B cell (primary cell): ENCODE measurements at regions of chr15 and their contacts with region 1.

Region 1: GRCh38 chr15:75367913-75368688 is at the start of gene MAN2C1:
- DNase-seq: peak; percentile 97
- ATAC-seq: peak; percentile 92
- H3K4me3 ChIP-seq: peak within 1 kb of the TSS; percentile 74 to 96 (median 87)
- H3K4me3 Mint-ChIP-seq: peak within 1 kb of the TSS; percentile 93
- H3K27ac ChIP-seq: peak within 1 kb of the TSS; percentile 98 to 99
- H3K27ac Mint-ChIP-seq: peak within 1 kb of the TSS; percentile 95
- H3K4me1 ChIP-seq: peaks cover 13 to 19% of the 10 kb centered on the region in 2 donors
- H3K4me1 Mint-ChIP-seq: peaks cover 27% of the 10 kb centered on the region
- H3K27me3 ChIP-seq: no peaks in the 10 kb centered on the region
- H3K27me3 Mint-ChIP-seq: no peaks in the 10 kb centered on the region
- CTCF ChIP-seq: peak; percentile 74
- total RNA-seq, gene MAN2C1: 227 and 229 TPM in 2 replicates

Region 2: GRCh38 chr15:75313116-75313845 is 54.8 kb before region 1 on chr15:
- CTCF ChIA-PET with region 1: no interaction called
- POLR2A ChIA-PET with region 1: no interaction called
- intact Hi-C with region 1: no loop called
- DNase-seq: no peak
- ATAC-seq: no peak
- H3K4me3 ChIP-seq: no peak overlapping the region
- H3K4me3 Mint-ChIP-seq: no peak overlapping the region
- H3K27ac ChIP-seq: no peak overlapping the region
- H3K27ac Mint-ChIP-seq: no peak overlapping the region
- H3K4me1 ChIP-seq: no peaks in the 10 kb centered on the region
- H3K4me1 Mint-ChIP-seq: no peaks in the 10 kb centered on the region
- H3K27me3 ChIP-seq: peaks cover 0 to 2% (median under 1%) of the 10 kb centered on the region in 4 experiments
- H3K27me3 Mint-ChIP-seq: peaks cover 19% of the 10 kb centered on the region
- CTCF ChIP-seq: no peak

Region 3: GRCh38 chr15:75347222-75347878 is 20.8 kb before region 1 on chr15:
- CTCF ChIA-PET with region 1: interaction called, 52 read pairs
- POLR2A ChIA-PET with region 1: interaction called, 25 read pairs
- intact Hi-C with region 1: loop called (anchors 1 kb)
- DNase-seq: peak; percentile 97
- ATAC-seq: peak; percentile 80
- H3K4me3 ChIP-seq: peak overlapping the region; percentile 3 to 82 (median 70)
- H3K4me3 Mint-ChIP-seq: peak overlapping the region; percentile 80
- H3K27ac ChIP-seq: peak overlapping the region; percentile 92 to 94
- H3K27ac Mint-ChIP-seq: peak overlapping the region; percentile 94
- H3K4me1 ChIP-seq: peaks cover 31 to 47% of the 10 kb centered on the region in 2 donors
- H3K4me1 Mint-ChIP-seq: peaks cover 45% of the 10 kb centered on the region
- H3K27me3 ChIP-seq: no peaks in the 10 kb centered on the region
- H3K27me3 Mint-ChIP-seq: no peaks in the 10 kb centered on the region
- CTCF ChIP-seq: no peak

Region 4: DNA sequence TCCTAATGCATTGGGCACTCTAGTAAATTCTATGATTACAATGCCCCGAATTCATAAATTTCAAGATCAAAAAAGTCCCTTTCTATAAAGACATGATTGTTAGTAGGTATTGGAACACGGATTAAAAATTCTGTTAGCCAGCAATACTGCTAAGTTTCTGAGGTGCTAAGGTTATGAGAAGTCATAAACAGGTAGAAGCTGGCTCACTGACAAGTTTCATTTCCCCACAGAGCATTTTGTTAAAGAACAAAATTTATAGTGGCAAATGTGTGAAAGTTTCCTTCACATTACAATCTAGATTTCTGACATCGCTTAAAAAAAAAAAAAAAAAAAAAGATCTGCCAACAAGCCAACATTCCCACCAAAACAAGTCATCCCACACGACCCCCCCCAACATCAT is 12.7 kb after region 1 on chr15:
- CTCF ChIA-PET with region 1: interaction called, 25 read pairs
- POLR2A ChIA-PET with region 1: interaction called, 13 read pairs
- intact Hi-C with region 1: no loop called
- DNase-seq: peak; percentile 44
- ATAC-seq: peak; percentile 39
- H3K4me3 ChIP-seq: no peak overlapping the region
- H3K4me3 Mint-ChIP-seq: peak overlapping the region; percentile 12
- H3K27ac ChIP-seq: peak overlapping the region in 1 of 2 donors; percentile 35
- H3K27ac Mint-ChIP-seq: peak overlapping the region; percentile 54
- H3K4me1 ChIP-seq: peaks cover 23 to 25% of the 10 kb centered on the region in 2 donors
- H3K4me1 Mint-ChIP-seq: peaks cover 29% of the 10 kb centered on the region
- H3K27me3 ChIP-seq: no peaks in the 10 kb centered on the region
- H3K27me3 Mint-ChIP-seq: no peaks in the 10 kb centered on the region
- CTCF ChIP-seq: no peak

Region 5: DNA sequence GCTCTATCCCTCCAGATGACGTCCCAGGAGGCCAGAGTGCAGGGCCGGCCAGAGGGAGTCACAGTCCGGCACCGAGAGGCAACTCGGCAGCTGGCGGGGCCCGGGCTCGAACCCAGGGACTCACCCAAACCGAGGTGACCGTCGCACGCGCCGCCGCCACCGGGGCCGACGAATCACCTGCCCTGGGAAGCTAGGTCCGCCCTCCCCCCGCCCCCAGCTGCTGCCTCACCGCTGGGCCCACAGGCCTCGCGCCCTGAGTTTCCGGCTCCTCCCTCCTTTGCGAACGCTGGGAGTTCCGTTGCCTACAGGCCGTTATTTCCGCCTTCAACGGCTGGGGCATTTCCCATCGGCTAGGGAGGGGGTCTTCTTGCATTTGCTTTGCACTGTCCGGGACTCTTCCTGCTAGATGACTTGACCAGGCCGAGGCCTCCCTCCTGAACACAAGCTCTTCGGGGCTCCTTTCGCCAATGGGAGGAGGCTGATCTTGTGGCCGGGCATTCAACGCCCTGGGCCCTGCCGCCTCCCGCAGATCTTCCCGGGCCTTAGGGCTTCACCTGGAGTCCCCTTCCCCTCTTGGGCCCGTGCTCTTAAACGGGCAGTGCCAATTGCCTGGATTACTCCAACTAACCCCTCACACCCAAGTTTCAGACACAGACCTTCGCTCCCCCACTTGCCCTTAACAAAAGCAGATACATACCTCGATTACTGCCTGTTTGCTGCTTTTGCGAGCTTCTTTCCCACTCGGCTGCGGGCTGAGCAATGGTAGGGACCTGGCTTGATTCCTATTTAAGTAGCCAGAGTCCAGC is 257.6 kb after region 1 on chr15 and contains the start of gene SNUPN:
- CTCF ChIA-PET with region 1: interaction called, 16 read pairs
- POLR2A ChIA-PET with region 1: no interaction called
- intact Hi-C with region 1: loop called (anchors 1 kb)
- DNase-seq: peak; percentile 96
- ATAC-seq: peak; percentile 91
- H3K4me3 ChIP-seq: peak within 1 kb of the TSS; percentile 72 to 97 (median 93)
- H3K4me3 Mint-ChIP-seq: peak within 1 kb of the TSS; percentile 91
- H3K27ac ChIP-seq: peak within 1 kb of the TSS; percentile 91 to 97
- H3K27ac Mint-ChIP-seq: peak within 1 kb of the TSS; percentile 95
- H3K4me1 ChIP-seq: peaks cover 7 to 12% of the 10 kb centered on the region in 2 donors
- H3K4me1 Mint-ChIP-seq: peaks cover 13% of the 10 kb centered on the region
- H3K27me3 ChIP-seq: no peaks in the 10 kb centered on the region
- H3K27me3 Mint-ChIP-seq: no peaks in the 10 kb centered on the region
- CTCF ChIP-seq: no peak
- total RNA-seq, gene SNUPN: 19.6 and 23.5 TPM in 2 replicates

Region 6: GRCh38 chr15:75684642-75685041 is 316.5 kb after region 1 on chr15:
- CTCF ChIA-PET with region 1: interaction called, 26 read pairs
- POLR2A ChIA-PET with region 1: no interaction called
- intact Hi-C with region 1: no loop called
- DNase-seq: no peak
- ATAC-seq: no peak
- H3K4me3 ChIP-seq: no peak overlapping the region
- H3K4me3 Mint-ChIP-seq: no peak overlapping the region
- H3K27ac ChIP-seq: no peak overlapping the region
- H3K27ac Mint-ChIP-seq: no peak overlapping the region
- H3K4me1 ChIP-seq: peaks cover 0 to 6% of the 10 kb centered on the region in 2 donors
- H3K4me1 Mint-ChIP-seq: peaks cover 8% of the 10 kb centered on the region
- H3K27me3 ChIP-seq: peaks cover 0 to 4% (median 0%) of the 10 kb centered on the region in 4 experiments
- H3K27me3 Mint-ChIP-seq: peaks cover 4% of the 10 kb centered on the region
- CTCF ChIP-seq: no peak